Activated B cell treated with CpG ODN at 0.5 μM for 24 hours (primary cell): ENCODE measurements at regions of chr1 and their contacts with region 1.

Region 1: GRCh38 chr1:93252598-93252997 is 72.1 kb downstream of the CCDC18 start:
- DNase-seq: no peak
- ATAC-seq: no peak
- H3K4me3 Mint-ChIP-seq: no peak overlapping the region
- H3K27ac Mint-ChIP-seq: no peak overlapping the region
- H3K4me1 Mint-ChIP-seq: no peaks in the 10 kb centered on the region
- H3K27me3 Mint-ChIP-seq: no peaks in the 10 kb centered on the region
- CTCF ChIP-seq: no peak

Region 2: DNA sequence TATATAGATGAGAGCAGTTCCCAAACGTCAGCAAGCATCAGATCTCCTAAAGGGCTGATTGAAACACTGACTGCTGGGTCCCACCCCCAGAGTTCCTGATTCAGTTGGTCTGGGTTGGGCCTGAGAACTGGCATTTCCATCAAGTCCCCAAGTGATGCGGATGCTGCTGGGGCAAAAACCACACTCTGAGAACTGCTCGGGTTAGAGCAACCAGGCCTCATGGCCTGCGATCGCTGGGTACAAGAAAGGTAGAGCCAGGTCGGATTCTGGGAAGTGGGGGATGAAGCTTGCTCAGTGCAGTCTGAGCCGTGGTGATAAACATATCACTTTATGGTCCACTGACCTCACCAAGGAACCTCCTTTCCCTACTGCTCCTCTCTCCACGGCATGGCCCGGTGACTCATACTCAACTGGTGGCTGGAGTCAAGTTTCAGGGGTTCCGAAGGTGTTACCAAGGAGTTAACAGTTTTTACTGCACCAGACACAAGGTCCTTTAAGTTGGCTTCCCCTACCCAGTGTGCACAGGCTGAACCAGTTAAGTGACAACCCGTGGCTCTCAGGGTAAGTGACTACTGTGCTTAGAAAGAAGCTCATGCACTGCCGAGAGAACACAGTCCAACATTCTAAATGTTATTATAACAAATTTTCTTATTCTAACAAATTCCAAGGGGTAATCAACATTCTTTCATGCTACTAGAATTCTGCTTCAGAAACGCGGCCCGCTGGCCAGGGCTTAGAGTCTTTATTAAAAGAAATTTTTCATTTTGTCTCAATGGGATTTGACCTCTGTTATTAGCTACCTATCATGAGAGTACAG is 1520.1 kb before region 1 on chr1:
- CTCF ChIA-PET with region 1: no interaction called
- POLR2A ChIA-PET with region 1: no interaction called
- intact Hi-C with region 1: no loop called
- DNase-seq: no peak
- ATAC-seq: no peak
- H3K4me3 Mint-ChIP-seq: no peak overlapping the region
- H3K27ac Mint-ChIP-seq: no peak overlapping the region
- H3K4me1 Mint-ChIP-seq: peaks cover 7% of the 10 kb centered on the region
- H3K27me3 Mint-ChIP-seq: peaks cover 10% of the 10 kb centered on the region
- CTCF ChIP-seq: no peak

Region 3: DNA sequence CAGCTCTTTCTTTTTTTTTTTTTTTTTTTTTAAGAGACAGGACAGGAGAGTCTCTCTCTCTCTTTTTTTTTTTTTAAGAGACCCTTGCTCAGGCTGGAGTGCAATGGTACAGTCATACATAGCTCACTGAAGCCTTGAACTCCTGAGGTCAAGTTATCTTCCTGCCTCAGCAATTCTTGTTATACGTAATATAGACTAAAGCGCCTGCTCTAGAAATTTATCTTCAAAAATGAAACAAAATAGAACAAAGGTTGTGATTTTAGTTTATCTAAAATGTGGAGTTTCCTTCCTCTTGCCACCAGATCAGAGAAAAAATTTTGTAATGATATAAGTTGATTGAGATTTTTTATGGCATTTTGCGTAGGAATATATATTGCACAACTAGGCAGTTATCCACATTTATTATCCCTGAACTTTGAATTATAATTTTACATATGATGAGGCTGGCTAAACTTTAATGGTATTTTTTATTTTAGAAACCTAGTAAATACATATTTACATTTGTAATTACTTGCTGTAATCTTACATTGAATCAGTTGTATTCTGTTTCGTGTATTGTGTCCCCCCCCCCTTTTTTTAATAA is 129.3 kb before region 1 on chr1:
- CTCF ChIA-PET with region 1: no interaction called
- POLR2A ChIA-PET with region 1: interaction called, 12 read pairs
- intact Hi-C with region 1: no loop called
- DNase-seq: no peak
- ATAC-seq: no peak
- H3K4me3 Mint-ChIP-seq: no peak overlapping the region
- H3K27ac Mint-ChIP-seq: no peak overlapping the region
- H3K4me1 Mint-ChIP-seq: no peaks in the 10 kb centered on the region
- H3K27me3 Mint-ChIP-seq: no peaks in the 10 kb centered on the region
- CTCF ChIP-seq: no peak

Region 4: GRCh38 chr1:93275634-93276295 is 23.2 kb after region 1 on chr1:
- CTCF ChIA-PET with region 1: no interaction called
- POLR2A ChIA-PET with region 1: no interaction called
- intact Hi-C with region 1: no loop called
- DNase-seq: no peak
- ATAC-seq: no peak
- H3K4me3 Mint-ChIP-seq: no peak overlapping the region
- H3K27ac Mint-ChIP-seq: no peak overlapping the region
- H3K4me1 Mint-ChIP-seq: no peaks in the 10 kb centered on the region
- H3K27me3 Mint-ChIP-seq: no peaks in the 10 kb centered on the region
- CTCF ChIP-seq: no peak

Region 5: GRCh38 chr1:93414749-93415148 is 162.2 kb after region 1 on chr1:
- CTCF ChIA-PET with region 1: no interaction called
- POLR2A ChIA-PET with region 1: no interaction called
- intact Hi-C with region 1: no loop called
- DNase-seq: no peak
- ATAC-seq: no peak
- H3K4me3 Mint-ChIP-seq: peak overlapping the region; percentile 25
- H3K27ac Mint-ChIP-seq: peak overlapping the region; percentile 2
- H3K4me1 Mint-ChIP-seq: peaks cover 21% of the 10 kb centered on the region
- H3K27me3 Mint-ChIP-seq: peaks cover 5% of the 10 kb centered on the region
- CTCF ChIP-seq: no peak